Activated CD4-positive, alpha-beta memory T cell treated with anti-CD3 and anti-CD28 coated beads for 36 hours (primary cell): ENCODE measurements at regions of chr4 and their contacts with region 1.

Region 1: GRCh38 chr4:25376754-25377571 is at the start of gene ANAPC4:
- DNase-seq: peak; percentile 98
- H3K4me3 Mint-ChIP-seq: no peak within 1 kb of the TSS
- H3K27ac Mint-ChIP-seq: peak within 1 kb of the TSS; percentile 72
- H3K4me1 Mint-ChIP-seq: peaks cover 6% of the 10 kb centered on the region
- H3K27me3 Mint-ChIP-seq: no peaks in the 10 kb centered on the region
- total RNA-seq, gene ANAPC4: 26.1 to 31.5 TPM

Region 2: DNA sequence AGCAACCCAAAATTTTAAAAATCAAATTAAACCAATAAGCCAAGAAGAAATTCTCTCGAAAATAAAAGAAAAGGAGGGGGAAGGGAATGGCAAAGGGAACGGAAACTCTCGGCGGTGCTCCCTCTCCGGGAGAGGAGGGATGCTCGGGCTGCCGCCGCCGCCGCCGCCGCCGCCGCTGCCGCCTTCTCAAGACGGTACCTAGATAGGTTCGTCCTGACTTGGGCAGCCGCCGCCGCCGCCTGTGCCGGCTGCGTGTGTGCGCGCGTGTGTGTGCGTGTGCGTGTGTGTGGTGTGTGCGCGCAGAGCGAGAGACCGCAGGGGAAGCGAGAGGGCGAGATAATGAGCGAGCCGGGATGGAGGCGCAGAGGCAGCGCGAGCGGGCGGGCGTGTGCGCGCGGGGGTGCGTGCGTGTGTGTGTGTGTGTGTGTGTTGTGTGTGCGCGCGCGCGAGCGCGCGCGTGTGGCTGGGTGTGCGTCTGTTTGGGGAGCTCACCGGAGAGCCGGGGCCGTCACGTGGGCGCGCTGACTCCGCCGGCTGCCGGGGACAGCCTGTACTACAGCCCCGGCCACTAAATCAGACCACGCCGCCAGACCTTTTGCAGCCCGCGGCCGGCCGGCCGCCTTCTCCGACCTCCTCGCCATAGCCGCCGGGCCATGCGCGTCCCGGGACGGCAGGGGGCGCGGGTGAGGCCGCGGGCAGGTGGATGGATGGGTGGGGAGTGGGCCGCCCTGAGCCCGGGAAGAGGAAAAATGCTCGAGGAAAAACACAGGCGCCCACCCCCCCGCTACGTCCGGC is 904.3 kb before region 1 on chr4:
- CTCF ChIA-PET with region 1: no interaction called
- POLR2A ChIA-PET with region 1: no interaction called
- intact Hi-C with region 1: loop called (anchors 10 kb)
- DNase-seq: peak; percentile 73
- H3K4me3 Mint-ChIP-seq: peak overlapping the region; percentile 79
- H3K27ac Mint-ChIP-seq: no peak overlapping the region
- H3K4me1 Mint-ChIP-seq: peaks cover 25% of the 10 kb centered on the region
- H3K27me3 Mint-ChIP-seq: peaks cover 47% of the 10 kb centered on the region

Region 3: DNA sequence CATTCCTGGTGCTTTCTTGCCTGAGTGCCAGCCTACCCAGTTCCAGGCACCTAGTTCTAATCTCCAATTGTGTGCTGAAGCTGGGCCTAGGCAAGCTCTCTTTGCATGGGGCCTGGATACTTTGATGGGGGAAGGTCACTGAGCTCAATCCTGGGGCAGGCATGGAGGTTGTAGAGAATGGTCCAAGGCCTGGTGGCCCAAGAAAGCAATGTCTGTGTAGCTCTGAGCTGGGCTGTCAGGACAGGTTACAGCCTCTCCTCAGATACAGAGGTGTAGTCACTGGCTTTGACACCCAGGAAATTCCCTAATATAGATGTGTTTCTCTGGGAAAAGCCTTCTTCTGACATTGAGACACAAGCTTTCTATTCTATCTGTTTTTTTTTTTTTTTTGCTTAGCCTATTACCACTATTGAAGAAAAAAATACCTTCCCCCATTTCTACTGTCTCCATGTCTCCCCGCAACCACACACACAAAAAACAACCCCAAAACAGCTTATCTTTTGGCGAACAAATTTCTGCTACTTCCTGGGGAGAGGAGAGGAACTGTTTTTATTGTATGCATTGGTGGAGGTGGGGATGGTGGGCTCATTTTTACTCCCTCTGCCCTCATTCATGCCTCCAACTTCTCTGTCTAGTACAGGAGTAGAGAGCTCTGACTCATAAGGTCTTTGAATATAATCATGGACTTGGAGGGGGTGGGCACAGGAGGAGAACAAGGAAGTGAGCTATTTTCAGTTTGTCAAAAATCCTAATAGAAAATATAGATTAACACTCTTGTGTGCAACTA is 725.9 kb before region 1 on chr4:
- CTCF ChIA-PET with region 1: no interaction called
- POLR2A ChIA-PET with region 1: no interaction called
- intact Hi-C with region 1: no loop called
- DNase-seq: no peak
- H3K4me3 Mint-ChIP-seq: no peak overlapping the region
- H3K27ac Mint-ChIP-seq: no peak overlapping the region
- H3K4me1 Mint-ChIP-seq: no peaks in the 10 kb centered on the region
- H3K27me3 Mint-ChIP-seq: peaks cover 5% of the 10 kb centered on the region

Region 4: GRCh38 chr4:25223802-25224375 is 153.1 kb before region 1 on chr4:
- CTCF ChIA-PET with region 1: no interaction called
- POLR2A ChIA-PET with region 1: no interaction called
- intact Hi-C with region 1: no loop called
- DNase-seq: no peak
- H3K4me3 Mint-ChIP-seq: no peak overlapping the region
- H3K27ac Mint-ChIP-seq: no peak overlapping the region
- H3K4me1 Mint-ChIP-seq: no peaks in the 10 kb centered on the region
- H3K27me3 Mint-ChIP-seq: no peaks in the 10 kb centered on the region

Region 5: GRCh38 chr4:25234390-25235370 is 142.3 kb before region 1 on chr4:
- CTCF ChIA-PET with region 1: interaction called, 3 read pairs
- POLR2A ChIA-PET with region 1: interaction called, 4 read pairs
- intact Hi-C with region 1: loop called (anchors 2 kb)
- DNase-seq: peak; percentile 59
- H3K4me3 Mint-ChIP-seq: peak overlapping the region; percentile 93
- H3K27ac Mint-ChIP-seq: peak overlapping the region; percentile 94
- H3K4me1 Mint-ChIP-seq: peaks cover 51% of the 10 kb centered on the region
- H3K27me3 Mint-ChIP-seq: no peaks in the 10 kb centered on the region

Region 6: DNA sequence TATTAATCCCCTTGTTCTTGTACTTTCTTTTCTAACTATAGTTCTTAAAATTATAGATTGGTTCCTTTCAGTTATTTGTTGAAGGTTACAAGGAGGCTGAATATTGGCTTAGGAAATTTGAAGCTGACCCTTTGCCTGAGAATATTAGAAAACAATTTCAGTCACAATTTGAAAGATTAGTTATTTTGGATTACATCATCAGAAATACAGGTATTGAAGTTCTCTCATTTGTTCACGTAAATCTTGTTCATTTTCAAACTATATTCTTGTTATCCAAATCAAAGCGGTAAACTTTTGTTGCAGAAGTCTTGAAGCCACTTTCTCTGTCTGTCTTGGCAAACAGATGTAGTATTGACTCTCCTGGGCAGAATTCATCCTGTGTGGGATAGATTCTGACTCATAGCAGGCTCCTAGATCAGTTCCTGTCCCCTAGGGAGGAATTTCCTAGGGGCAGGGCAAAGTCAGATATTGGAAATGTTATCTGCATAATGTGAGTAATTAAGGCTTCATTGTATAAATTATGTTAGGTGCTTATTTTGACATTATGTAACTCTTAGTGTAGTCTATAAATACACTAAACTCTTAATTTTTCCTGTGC is 117.9 kb before region 1 on chr4:
- CTCF ChIA-PET with region 1: no interaction called
- POLR2A ChIA-PET with region 1: no interaction called
- intact Hi-C with region 1: no loop called
- DNase-seq: no peak
- H3K4me3 Mint-ChIP-seq: no peak overlapping the region
- H3K27ac Mint-ChIP-seq: no peak overlapping the region
- H3K4me1 Mint-ChIP-seq: no peaks in the 10 kb centered on the region
- H3K27me3 Mint-ChIP-seq: no peaks in the 10 kb centered on the region

Region 7: GRCh38 chr4:25330905-25331808 is 45.8 kb before region 1 on chr4:
- CTCF ChIA-PET with region 1: no interaction called
- POLR2A ChIA-PET with region 1: no interaction called
- intact Hi-C with region 1: loop called (anchors 2 kb)
- DNase-seq: no peak
- H3K4me3 Mint-ChIP-seq: peak overlapping the region; percentile 75
- H3K27ac Mint-ChIP-seq: peak overlapping the region; percentile 86
- H3K4me1 Mint-ChIP-seq: peaks cover 14% of the 10 kb centered on the region
- H3K27me3 Mint-ChIP-seq: no peaks in the 10 kb centered on the region

Region 8: GRCh38 chr4:25913851-25914669 is 537.1 kb after region 1 on chr4 and contains the start of gene SMIM20:
- CTCF ChIA-PET with region 1: no interaction called
- POLR2A ChIA-PET with region 1: interaction called, 3 read pairs
- intact Hi-C with region 1: loop called (anchors 1 kb)
- DNase-seq: peak; percentile 93
- H3K4me3 Mint-ChIP-seq: peak within 1 kb of the TSS; percentile 87
- H3K27ac Mint-ChIP-seq: peak within 1 kb of the TSS; percentile 94
- H3K4me1 Mint-ChIP-seq: peaks cover 17% of the 10 kb centered on the region
- H3K27me3 Mint-ChIP-seq: no peaks in the 10 kb centered on the region
- total RNA-seq, gene SMIM20: 26.0 to 28.0 TPM